ENCODE measurements at regions of chr10 and their contacts with region 1.

Region 1: GRCh38 chr10:32033171-32033570 is 23.1 kb downstream of the KIF5B start:
- DNase-seq: no peak
- H3K4me3 Mint-ChIP-seq: no peak overlapping the region
- H3K27ac Mint-ChIP-seq: no peak overlapping the region
- H3K4me1 Mint-ChIP-seq: peaks cover 11% of the 10 kb centered on the region
- H3K27me3 Mint-ChIP-seq: no peaks in the 10 kb centered on the region

Region 2: GRCh38 chr10:32050177-32050576 is 17.0 kb after region 1 on chr10:
- CTCF ChIA-PET with region 1: interaction called, 11 read pairs
- POLR2A ChIA-PET with region 1: no interaction called
- DNase-seq: no peak
- H3K4me3 Mint-ChIP-seq: no peak overlapping the region
- H3K27ac Mint-ChIP-seq: peak overlapping the region; percentile 46
- H3K4me1 Mint-ChIP-seq: peaks cover 79% of the 10 kb centered on the region
- H3K27me3 Mint-ChIP-seq: no peaks in the 10 kb centered on the region

Measured in activated CD4-positive, alpha-beta T cell treated with anti-CD3 and anti-CD28 coated beads, Interleukin-2, amount 10 ng/mL, durations not matched to agents 7 days and 5 days (primary cell).